Ascending aorta (tissue), 2 donors: ENCODE measurements at regions of chr2 and their contacts with region 1.

Region 1: DNA sequence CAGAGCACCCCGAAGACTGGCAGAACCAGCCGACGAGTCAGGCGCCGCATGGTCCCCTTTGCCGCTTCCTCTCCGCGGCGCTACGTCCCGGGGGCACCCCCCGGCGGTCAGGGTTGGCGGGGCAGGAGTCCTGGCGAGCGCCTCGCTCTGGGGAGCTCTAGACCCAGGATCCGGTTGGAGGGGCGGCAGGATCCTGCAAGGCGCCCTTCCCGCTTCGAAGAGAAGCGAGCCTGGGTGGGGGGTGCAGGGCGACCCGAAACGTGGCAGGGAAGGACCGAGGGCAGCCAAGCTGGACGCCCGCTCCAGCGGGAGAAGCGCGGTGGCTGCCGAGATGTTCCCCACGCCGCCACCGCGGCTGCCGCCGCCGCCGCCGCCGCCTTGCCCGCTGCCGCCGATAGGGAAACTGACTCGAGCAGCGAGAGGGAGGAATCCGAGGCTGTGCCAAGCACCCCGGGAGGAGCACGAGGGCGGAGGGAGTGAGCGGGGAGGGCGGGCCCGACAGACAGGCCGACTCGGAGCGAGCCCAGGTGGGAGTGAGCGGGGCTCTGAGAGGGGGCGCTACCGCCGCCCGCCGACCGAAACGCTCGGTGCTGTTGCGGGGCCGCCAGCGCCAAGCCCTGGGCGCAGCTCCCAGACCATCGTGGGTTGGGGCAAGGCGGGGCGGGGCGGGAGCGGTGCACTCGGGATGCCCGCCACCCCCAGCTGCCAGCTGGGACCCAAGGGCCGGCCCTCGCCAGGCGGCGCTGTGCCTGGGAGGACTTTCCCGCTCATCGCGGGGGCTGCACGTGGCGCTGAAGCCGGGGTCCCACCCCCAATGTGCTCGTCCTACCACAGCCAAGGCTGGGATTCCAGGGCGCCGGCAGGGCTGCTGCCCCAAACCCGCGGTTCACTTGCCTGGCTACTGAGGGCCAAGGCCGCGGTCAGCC is at the start of gene GALNT14:
- DNase-seq: peak in 1 of 2 donors; percentile 73
- H3K4me3 ChIP-seq: peak within 1 kb of the TSS; percentile 62 to 74
- H3K27ac ChIP-seq: peak within 1 kb of the TSS; percentile 10 to 28
- H3K4me1 ChIP-seq: peaks cover 8 to 10% of the 10 kb centered on the region in 2 donors
- H3K27me3 ChIP-seq: no peaks in the 10 kb centered on the region
- CTCF ChIP-seq: peak; percentile 40 to 62 (median 45)
- total RNA-seq, gene GALNT14: not detected

Region 2: DNA sequence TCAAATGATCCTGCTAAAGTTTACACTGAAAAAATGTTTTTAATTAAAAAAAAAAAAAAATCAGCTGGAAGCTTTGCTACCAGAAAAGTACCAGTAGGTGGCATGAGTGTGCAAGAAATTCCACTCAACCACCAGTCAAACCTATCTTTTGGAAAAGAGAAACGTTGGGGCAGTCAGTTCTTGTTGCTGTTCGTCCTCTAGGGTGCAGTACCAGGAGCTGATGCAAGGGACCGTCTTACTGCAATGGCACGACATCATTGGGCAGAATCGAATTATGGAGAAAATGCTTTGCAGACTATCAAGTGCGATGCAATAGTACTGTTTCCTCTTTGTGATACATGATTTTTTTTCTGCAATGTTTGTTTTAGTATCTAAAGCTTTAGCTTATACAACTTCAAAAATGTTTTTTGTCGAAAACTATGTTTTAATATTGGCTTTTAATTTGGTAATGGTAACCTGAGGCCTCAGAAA is 973.2 kb before region 1 on chr2:
- intact Hi-C with region 1: loop called (anchors 10 kb)
- DNase-seq: peak in 1 of 2 donors; percentile 70
- H3K4me3 ChIP-seq: no peak overlapping the region
- H3K27ac ChIP-seq: no peak overlapping the region
- H3K4me1 ChIP-seq: peaks cover 0 to 2% of the 10 kb centered on the region in 2 donors
- H3K27me3 ChIP-seq: no peaks in the 10 kb centered on the region
- CTCF ChIP-seq: peak; percentile 57 to 85 (median 75)

Region 3: GRCh38 chr2:30979822-30980245 is 158.5 kb before region 1 on chr2:
- intact Hi-C with region 1: loop called (anchors 5 kb)
- DNase-seq: peak; percentile 88 to 93
- H3K4me3 ChIP-seq: no peak overlapping the region
- H3K27ac ChIP-seq: peak overlapping the region; percentile 70 to 83
- H3K4me1 ChIP-seq: peaks cover 4 to 11% of the 10 kb centered on the region in 2 donors
- H3K27me3 ChIP-seq: no peaks in the 10 kb centered on the region
- CTCF ChIP-seq: peak in 2 of 3 experiments; percentile 44 to 57

Region 4: DNA sequence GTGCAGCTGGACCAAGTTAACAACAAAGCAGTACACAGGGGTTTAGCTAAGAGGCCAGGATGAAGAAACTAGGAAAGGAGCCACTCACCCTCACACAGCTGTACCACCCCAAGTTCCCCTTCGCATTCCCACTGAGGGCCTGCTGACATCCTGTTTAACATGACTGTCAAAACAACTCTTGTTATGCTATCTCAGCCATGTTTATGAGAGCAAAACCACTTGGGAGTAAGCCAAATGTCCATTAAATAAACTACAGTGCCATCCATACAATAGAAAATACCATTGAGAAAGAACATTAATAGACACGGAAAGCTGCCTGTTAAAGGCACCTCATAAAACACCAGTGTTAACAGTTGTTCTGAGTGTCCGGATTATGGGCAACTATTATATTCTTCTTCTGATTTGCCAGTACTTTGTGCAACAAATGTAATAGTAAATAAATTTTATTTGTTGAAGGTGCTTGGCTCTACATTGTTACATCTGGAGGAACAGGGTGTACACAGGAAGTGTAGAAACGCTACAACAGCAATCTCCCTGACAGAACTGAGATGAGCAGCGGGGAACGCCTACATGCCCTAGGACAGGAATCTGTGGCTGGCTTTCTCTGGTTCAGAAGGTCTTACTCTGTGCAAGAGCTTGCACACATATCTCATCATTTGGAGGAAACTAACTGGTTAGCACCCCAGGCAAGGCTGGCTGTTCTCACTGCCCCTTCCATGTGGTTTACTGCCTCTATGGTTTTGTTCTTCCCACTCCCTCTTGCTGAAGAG is 181.3 kb after region 1 on chr2:
- intact Hi-C with region 1: loop called (anchors 5 kb)
- DNase-seq: no peak
- H3K4me3 ChIP-seq: no peak overlapping the region
- H3K27ac ChIP-seq: peak overlapping the region in 1 of 2 donors; percentile 42
- H3K4me1 ChIP-seq: peaks cover 5 to 23% of the 10 kb centered on the region in 2 donors
- H3K27me3 ChIP-seq: no peaks in the 10 kb centered on the region
- CTCF ChIP-seq: no peak